ENCODE measurements at regions of chr12 and their contacts with region 1.

Region 1: GRCh38 chr12:12716793-12717585 is at the start of gene CDKN1B:
- DNase-seq: peak; percentile 75 to 95 (median 84)
- ATAC-seq: peak; percentile 56
- H3K4me3 ChIP-seq: peak within 1 kb of the TSS; percentile 97
- H3K4me3 Mint-ChIP-seq: peak within 1 kb of the TSS; percentile 99
- H3K27ac ChIP-seq: peak within 1 kb of the TSS; percentile 88 to 97
- H3K27ac Mint-ChIP-seq: peak within 1 kb of the TSS; percentile 95
- H3K4me1 ChIP-seq: peaks cover 38% of the 10 kb centered on the region
- H3K4me1 Mint-ChIP-seq: peaks cover 69% of the 10 kb centered on the region
- H3K27me3 ChIP-seq: no peaks in the 10 kb centered on the region
- H3K27me3 Mint-ChIP-seq: no peaks in the 10 kb centered on the region
- CTCF ChIP-seq: no peak
- total RNA-seq, gene CDKN1B: 352 TPM

Region 2: DNA sequence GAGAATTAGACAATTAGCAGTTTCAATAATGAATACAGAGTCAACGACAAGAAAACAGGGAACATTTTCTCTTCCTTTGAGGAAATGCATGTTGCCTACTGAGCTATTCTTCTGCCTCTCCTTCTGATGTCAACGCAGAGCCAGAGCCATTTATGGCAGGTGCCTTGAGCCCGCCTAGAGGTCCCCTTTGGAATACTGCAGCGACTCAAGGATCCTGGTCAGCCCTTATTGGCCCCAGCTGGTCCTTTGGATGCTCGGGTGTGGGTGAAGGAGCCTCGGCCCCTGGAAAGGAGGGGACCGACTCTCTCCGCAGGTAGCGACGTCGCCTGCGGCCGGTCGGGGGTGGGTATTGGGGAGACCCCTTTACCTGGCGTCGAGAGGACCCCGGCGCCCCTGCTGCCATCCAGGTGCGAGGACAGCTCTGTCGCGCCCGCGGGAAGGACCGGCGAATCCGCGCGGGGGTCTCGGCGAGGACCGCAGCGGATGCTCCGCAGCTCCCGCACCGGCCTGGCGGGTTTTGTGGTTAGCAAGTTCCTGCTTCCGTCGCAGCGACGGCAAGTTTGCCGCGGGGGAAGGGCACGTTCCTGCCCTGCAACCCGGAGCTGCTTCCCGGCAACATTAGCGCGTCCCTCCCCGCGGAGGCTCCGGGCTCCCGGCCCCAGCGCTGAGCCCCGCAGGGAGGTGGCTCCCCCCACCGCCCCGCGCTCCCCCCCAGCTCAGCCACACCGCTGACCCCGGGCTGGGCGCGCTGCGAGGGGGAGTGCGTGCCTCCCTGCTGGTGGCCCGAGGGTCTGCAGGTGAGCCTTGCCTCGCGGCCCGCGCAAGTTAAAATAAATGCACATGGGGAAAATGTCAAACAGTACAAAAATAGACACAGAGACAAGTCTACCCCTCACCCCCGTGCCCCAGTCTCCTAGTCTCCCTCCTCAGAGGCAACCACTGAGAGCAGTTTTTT is 367.0 kb before region 1 on chr12 and contains the start of gene MANSC1:
- CTCF ChIA-PET with region 1: no interaction called
- POLR2A ChIA-PET with region 1: interaction called, 12 read pairs
- intact Hi-C with region 1: no loop called
- DNase-seq: peak; percentile 14 to 79 (median 52)
- ATAC-seq: peak; percentile 71
- H3K4me3 ChIP-seq: peak within 1 kb of the TSS; percentile 54
- H3K4me3 Mint-ChIP-seq: peak within 1 kb of the TSS; percentile 72
- H3K27ac ChIP-seq: peak within 1 kb of the TSS; percentile 50 to 72
- H3K27ac Mint-ChIP-seq: peak within 1 kb of the TSS; percentile 79
- H3K4me1 ChIP-seq: peaks cover 24% of the 10 kb centered on the region
- H3K4me1 Mint-ChIP-seq: peaks cover 62% of the 10 kb centered on the region
- H3K27me3 ChIP-seq: no peaks in the 10 kb centered on the region
- H3K27me3 Mint-ChIP-seq: no peaks in the 10 kb centered on the region
- CTCF ChIP-seq: peak; percentile 48
- total RNA-seq, gene MANSC1: 0.33 to 0.45 TPM

Region 3: DNA sequence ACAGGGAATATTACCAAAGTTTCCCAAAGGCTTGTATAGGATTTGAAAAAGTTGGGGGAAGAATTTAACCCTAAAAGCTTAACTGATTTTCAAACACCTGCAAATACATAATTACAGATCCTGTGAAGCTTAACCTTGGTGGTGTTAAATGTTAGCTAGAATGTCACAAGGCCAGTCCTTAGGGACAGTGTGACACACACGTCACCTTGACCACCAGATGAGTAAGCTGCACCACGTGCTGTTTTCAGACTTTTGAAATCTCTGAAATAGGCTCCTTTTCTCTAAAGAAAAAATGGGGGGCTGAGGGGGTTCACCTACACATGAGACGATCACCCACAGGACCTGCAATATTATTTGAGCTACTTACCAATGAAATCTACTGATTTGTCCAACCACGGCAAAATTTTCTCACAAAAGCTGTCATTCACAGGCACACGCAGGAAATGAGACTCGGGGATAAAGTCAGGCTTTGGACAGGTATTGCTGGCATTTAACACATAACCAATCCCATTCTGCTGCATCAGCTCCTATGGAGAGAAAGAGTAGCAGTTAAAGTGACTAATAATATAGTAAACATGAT is 230.2 kb before region 1 on chr12:
- CTCF ChIA-PET with region 1: no interaction called
- POLR2A ChIA-PET with region 1: interaction called, 36 read pairs
- intact Hi-C with region 1: no loop called
- DNase-seq: no peak
- ATAC-seq: no peak
- H3K4me3 ChIP-seq: no peak overlapping the region
- H3K4me3 Mint-ChIP-seq: no peak overlapping the region
- H3K27ac ChIP-seq: peak overlapping the region in 1 of 2 donors; percentile 56
- H3K27ac Mint-ChIP-seq: peak overlapping the region; percentile 73
- H3K4me1 ChIP-seq: peaks cover 37% of the 10 kb centered on the region
- H3K4me1 Mint-ChIP-seq: peaks cover 51% of the 10 kb centered on the region
- H3K27me3 ChIP-seq: no peaks in the 10 kb centered on the region
- H3K27me3 Mint-ChIP-seq: no peaks in the 10 kb centered on the region
- CTCF ChIP-seq: no peak

Region 4: DNA sequence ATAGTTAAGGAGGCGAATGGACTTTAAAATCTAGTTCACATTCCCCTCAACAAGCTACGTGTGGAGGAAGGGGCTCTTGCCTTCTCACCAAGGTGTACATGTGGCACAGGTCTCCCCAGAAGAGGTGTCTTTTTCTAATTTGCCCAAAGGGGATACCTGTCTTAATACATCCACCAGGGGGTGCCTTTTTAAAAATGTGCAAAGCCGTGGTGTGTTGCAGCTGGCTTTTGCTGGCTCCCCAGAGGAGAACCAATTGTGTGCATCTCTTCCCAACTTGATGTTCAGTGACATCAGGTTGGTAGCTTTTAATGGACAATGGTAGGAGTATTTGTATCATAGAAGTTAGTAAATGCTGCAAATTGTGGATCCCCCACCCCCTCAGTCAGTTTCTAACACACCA is 71.5 kb before region 1 on chr12:
- CTCF ChIA-PET with region 1: interaction called, 9 read pairs
- POLR2A ChIA-PET with region 1: interaction called, 26 read pairs
- intact Hi-C with region 1: no loop called
- DNase-seq: peak in 12 of 14 experiments; percentile 4 to 79 (median 33)
- ATAC-seq: peak; percentile 91
- H3K4me3 ChIP-seq: no peak overlapping the region
- H3K4me3 Mint-ChIP-seq: no peak overlapping the region
- H3K27ac ChIP-seq: no peak overlapping the region
- H3K27ac Mint-ChIP-seq: peak overlapping the region; percentile 14
- H3K4me1 ChIP-seq: peaks cover 6% of the 10 kb centered on the region
- H3K4me1 Mint-ChIP-seq: peaks cover 6% of the 10 kb centered on the region
- H3K27me3 ChIP-seq: no peaks in the 10 kb centered on the region
- H3K27me3 Mint-ChIP-seq: no peaks in the 10 kb centered on the region
- CTCF ChIP-seq: peak; percentile 56

Region 5: DNA sequence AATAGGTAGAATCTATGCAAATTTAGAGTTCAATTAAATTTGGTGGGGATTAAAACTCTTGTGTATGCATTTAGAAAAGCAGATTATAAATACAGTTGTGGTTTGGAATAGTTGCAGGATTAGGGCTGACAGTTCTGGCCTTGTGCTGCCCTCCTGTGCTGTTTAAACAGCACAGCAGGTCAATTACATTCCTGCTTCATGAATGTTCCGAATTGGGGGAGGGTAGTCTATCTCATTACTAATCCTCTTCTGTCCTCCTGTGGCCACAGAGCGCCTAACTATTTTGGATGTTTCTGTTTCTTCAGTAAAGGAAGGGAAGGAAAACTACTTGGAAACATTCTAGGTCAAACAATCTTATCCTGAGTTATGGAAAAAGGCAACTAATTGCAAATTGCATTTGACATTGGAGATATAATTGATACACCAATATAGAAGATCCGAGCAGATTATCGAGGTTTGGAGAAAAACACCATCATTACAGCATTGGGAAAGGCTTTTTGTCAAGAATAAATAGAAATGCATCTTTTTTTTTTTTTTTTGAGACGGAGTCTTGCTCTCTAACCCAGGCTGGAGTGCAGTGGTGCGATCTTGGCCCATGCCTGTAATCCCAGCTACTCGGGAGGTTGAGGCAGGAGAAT is 12.3 kb before region 1 on chr12:
- CTCF ChIA-PET with region 1: interaction called, 19 read pairs
- POLR2A ChIA-PET with region 1: interaction called, 441 read pairs
- intact Hi-C with region 1: no loop called
- DNase-seq: peak in 7 of 14 experiments; percentile 22 to 84 (median 57)
- ATAC-seq: peak; percentile 88
- H3K4me3 ChIP-seq: no peak overlapping the region
- H3K4me3 Mint-ChIP-seq: peak overlapping the region; percentile 32
- H3K27ac ChIP-seq: no peak overlapping the region
- H3K27ac Mint-ChIP-seq: peak overlapping the region; percentile 69
- H3K4me1 ChIP-seq: peaks cover 29% of the 10 kb centered on the region
- H3K4me1 Mint-ChIP-seq: peaks cover 29% of the 10 kb centered on the region
- H3K27me3 ChIP-seq: no peaks in the 10 kb centered on the region
- H3K27me3 Mint-ChIP-seq: no peaks in the 10 kb centered on the region
- CTCF ChIP-seq: peak; percentile 73

Region 6: DNA sequence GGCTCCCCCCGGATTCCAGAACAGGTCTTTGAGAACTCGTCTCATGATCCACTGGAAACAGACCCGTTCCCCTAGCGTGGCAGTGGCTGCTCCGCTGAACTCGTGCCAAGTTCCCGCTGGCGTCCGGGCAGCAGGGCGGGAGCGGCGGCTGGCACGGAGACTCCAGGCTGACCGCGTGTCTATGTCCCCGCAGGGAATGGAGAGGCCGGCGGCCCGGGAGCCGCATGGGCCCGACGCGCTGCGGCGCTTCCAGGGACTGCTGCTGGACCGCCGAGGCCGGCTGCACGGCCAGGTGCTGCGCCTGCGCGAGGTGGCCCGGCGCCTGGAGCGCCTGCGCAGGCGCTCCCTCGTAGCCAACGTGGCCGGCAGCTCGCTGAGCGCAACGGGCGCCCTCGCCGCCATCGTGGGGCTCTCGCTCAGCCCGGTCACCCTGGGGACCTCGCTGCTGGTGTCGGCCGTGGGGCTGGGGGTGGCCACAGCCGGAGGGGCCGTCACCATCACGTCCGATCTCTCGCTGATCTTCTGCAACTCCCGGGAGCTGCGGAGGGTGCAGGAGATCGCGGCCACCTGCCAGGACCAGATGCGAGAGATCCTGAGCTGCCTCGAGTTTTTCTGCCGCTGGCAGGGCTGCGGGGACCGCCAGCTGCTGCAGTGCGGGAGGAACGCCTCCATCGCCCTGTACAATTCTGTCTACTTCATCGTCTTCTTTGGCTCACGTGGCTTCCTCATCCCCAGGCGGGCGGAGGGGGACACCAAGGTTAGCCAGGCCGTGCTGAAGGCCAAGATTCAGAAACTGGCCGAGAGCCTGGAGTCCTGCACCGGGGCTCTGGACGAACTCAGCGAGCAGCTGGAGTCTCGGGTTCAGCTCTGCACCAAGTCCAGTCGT is 70.0 kb after region 1 on chr12:
- CTCF ChIA-PET with region 1: no interaction called
- POLR2A ChIA-PET with region 1: interaction called, 19 read pairs
- intact Hi-C with region 1: no loop called
- DNase-seq: peak; percentile 44 to 92 (median 68)
- ATAC-seq: peak; percentile 87
- H3K4me3 ChIP-seq: peak overlapping the region; percentile 79
- H3K4me3 Mint-ChIP-seq: peak overlapping the region; percentile 93
- H3K27ac ChIP-seq: peak overlapping the region; percentile 64 to 75
- H3K27ac Mint-ChIP-seq: peak overlapping the region; percentile 83
- H3K4me1 ChIP-seq: peaks cover 27% of the 10 kb centered on the region
- H3K4me1 Mint-ChIP-seq: peaks cover 20% of the 10 kb centered on the region
- H3K27me3 ChIP-seq: no peaks in the 10 kb centered on the region
- H3K27me3 Mint-ChIP-seq: no peaks in the 10 kb centered on the region
- CTCF ChIP-seq: no peak

Region 7: DNA sequence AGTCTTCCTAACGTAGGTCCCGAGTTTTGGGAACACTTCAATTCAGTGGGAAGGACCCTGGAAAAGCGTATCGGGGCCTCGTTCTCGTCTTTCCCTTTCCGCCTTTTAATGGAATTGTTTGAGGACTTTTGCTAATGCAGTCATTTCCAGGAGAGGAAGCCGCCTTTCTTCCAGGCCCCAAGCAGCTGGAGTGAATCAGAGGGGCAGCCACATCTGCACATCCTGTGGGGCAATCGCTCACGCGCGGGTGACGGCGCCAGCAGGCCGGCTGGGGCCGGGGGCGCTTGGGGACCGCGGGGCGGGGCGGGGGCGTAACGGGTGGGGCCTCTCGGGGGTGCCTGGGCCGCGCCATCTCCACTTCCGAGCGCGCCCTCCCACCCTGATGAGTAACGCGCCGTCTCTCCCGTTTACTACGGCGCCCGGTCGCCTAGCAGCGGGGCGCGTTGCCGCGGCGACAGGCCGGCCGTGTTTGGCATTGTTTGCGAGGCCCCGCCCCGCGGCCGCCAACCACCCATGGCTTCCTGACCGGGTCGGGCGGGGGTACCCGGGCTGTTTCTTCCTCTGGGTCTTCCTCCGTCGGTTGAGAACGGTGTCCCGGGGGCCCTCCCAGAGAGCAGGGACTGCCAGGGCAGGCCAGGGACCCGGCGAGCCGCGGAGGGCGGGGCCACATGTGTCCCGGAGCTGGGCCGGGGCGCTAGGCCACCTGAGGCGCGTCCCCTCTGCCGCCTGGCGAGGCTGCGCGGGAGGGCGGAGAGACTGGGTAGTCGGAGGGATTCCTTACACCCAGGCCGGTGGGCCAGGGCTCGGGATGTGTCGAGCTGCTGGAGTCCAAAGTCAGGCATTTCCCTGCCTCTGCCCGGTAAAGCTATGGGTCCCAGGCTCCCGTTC is 384.1 kb after region 1 on chr12:
- CTCF ChIA-PET with region 1: no interaction called
- POLR2A ChIA-PET with region 1: no interaction called
- intact Hi-C with region 1: loop called in 1 of 2 experiments (anchors 5 kb)
- DNase-seq: peak; percentile 87 to 98 (median 92)
- ATAC-seq: peak; percentile 87
- H3K4me3 ChIP-seq: peak overlapping the region; percentile 64
- H3K4me3 Mint-ChIP-seq: peak overlapping the region; percentile 87
- H3K27ac ChIP-seq: peak overlapping the region; percentile 93 to 94
- H3K27ac Mint-ChIP-seq: peak overlapping the region; percentile 94
- H3K4me1 ChIP-seq: peaks cover 38% of the 10 kb centered on the region
- H3K4me1 Mint-ChIP-seq: peaks cover 53% of the 10 kb centered on the region
- H3K27me3 ChIP-seq: no peaks in the 10 kb centered on the region
- H3K27me3 Mint-ChIP-seq: no peaks in the 10 kb centered on the region
- CTCF ChIP-seq: no peak

Region 8: GRCh38 chr12:13452955-13453570 is 736.1 kb after region 1 on chr12:
- CTCF ChIA-PET with region 1: no interaction called
- POLR2A ChIA-PET with region 1: no interaction called
- intact Hi-C with region 1: no loop called
- DNase-seq: no peak
- ATAC-seq: no peak
- H3K4me3 ChIP-seq: no peak overlapping the region
- H3K4me3 Mint-ChIP-seq: no peak overlapping the region
- H3K27ac ChIP-seq: no peak overlapping the region
- H3K27ac Mint-ChIP-seq: no peak overlapping the region
- H3K4me1 ChIP-seq: no peaks in the 10 kb centered on the region
- H3K4me1 Mint-ChIP-seq: no peaks in the 10 kb centered on the region
- H3K27me3 ChIP-seq: peaks cover 13% of the 10 kb centered on the region in 2 experiments
- H3K27me3 Mint-ChIP-seq: peaks cover 6% of the 10 kb centered on the region
- CTCF ChIP-seq: no peak